Activated CD4-positive, alpha-beta memory T cell treated with anti-CD3 and anti-CD28 coated beads for 36 hours (primary cell): ENCODE measurements at regions of chr2 and their contacts with region 1.

Region 1: DNA sequence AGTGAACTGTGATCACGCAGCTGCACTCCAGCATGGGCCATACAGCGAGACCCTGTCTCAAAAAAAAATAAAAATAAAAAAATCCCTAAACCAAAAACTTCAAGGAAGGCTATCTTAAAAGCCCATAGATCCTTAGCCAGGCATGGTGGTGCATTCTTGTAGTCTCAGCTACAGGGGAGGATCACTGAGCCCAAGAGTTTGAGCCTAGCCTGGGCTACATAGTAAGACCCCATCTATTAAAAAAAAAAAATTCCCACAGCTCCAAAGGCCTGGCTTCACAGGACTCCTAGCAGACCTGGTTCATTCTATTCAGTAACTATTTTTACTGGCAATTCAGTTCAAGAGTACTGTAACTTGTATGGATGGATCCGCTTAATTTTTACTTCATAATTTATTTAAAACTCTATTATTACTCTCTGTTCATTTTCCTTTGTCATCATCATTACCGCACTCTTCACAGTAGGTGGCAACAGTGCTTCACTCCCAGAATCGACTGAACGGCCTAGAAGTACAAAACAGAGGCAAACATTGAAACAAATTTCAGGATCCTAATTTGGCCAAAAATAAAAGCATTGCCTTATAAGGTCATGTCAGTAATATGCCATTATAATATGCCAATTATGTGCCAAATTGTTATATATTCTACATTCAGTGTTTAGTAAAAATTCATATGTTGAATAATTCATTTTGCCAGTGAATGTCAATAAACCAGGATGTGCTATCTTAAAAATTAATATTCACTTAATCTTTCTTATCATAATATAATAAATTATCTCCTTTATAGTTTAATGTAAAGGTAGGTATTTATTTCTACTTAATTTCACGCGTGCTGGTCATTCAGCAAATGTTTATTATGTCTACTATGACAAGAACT is 14.3 kb upstream of the STAM2 start:
- DNase-seq: no peak
- H3K4me3 Mint-ChIP-seq: no peak overlapping the region
- H3K27ac Mint-ChIP-seq: no peak overlapping the region
- H3K4me1 Mint-ChIP-seq: no peaks in the 10 kb centered on the region
- H3K27me3 Mint-ChIP-seq: peaks cover 28% of the 10 kb centered on the region

Region 2: DNA sequence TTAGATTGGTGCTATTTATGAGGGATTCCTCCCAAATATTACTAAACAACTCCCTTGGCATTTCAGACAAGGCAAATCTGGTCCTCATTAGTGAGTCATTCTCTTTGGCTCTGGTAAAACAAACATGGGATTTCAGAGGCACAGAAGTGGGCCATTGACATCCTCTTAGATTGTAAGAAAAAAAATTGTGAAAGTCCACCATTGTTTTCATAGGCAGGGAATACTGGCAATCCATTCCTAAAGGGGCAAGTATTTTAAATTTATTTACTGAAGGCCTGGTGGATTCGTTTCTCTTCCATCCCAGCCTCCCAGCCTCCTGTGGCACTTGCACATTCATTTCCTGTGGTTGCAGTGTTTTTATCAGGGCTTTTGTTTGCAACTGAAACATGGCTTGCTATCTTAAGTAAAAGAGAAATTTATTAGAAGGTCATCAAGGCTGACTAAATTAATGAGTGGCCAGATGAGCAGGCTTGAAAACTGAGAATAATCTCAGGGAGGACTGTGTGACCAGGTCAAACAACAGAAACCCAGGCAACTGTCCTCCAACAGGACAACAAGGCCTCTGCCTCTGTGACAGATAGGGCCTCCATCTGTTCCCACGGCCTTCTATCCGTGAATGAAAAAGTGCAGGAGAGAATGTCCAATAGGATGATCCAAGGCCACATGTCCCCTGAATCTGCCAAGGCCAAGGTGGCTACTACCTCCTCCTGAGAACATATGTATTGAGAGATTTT is 855.6 kb before region 1 on chr2:
- CTCF ChIA-PET with region 1: no interaction called
- POLR2A ChIA-PET with region 1: no interaction called
- intact Hi-C with region 1: no loop called
- DNase-seq: no peak
- H3K4me3 Mint-ChIP-seq: no peak overlapping the region
- H3K27ac Mint-ChIP-seq: no peak overlapping the region
- H3K4me1 Mint-ChIP-seq: no peaks in the 10 kb centered on the region
- H3K27me3 Mint-ChIP-seq: peaks cover 10% of the 10 kb centered on the region

Region 3: DNA sequence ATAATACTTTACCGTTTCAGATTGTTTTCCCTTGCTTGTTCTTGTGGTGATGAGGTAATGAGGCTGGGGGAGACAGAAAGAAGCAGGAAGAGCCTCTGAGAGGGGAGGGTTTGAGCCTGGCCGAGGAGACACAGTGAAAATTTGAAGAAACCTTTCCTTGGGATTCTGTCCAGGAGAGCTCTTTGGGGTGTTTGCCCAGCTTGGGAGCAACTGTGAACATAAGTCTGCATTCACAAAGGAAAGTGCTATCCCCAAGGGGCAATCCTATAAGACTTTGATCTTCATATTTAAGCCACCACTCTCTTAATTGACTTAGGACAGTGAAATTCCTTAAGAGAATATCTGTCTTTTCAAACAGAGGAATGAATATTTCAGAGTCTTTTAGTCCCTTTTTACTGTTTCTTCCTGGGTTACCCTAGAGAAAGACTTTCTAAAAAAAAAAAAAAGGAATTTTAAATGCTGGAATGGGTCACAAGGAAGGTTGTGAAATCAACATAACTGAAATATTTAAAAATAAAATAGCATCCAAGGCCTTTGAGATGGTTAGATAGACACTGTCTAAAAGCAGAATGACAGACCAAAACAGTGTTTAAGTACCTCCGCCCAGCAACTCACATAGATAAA is 38.2 kb after region 1 on chr2:
- CTCF ChIA-PET with region 1: no interaction called
- POLR2A ChIA-PET with region 1: no interaction called
- intact Hi-C with region 1: no loop called
- DNase-seq: no peak
- H3K4me3 Mint-ChIP-seq: no peak overlapping the region
- H3K27ac Mint-ChIP-seq: no peak overlapping the region
- H3K4me1 Mint-ChIP-seq: no peaks in the 10 kb centered on the region
- H3K27me3 Mint-ChIP-seq: peaks cover 1% of the 10 kb centered on the region

Region 4: GRCh38 chr2:152376385-152376784 is 186.5 kb after region 1 on chr2:
- CTCF ChIA-PET with region 1: no interaction called
- POLR2A ChIA-PET with region 1: no interaction called
- intact Hi-C with region 1: no loop called
- DNase-seq: no peak
- H3K4me3 Mint-ChIP-seq: no peak overlapping the region
- H3K27ac Mint-ChIP-seq: no peak overlapping the region
- H3K4me1 Mint-ChIP-seq: no peaks in the 10 kb centered on the region
- H3K27me3 Mint-ChIP-seq: peaks cover 12% of the 10 kb centered on the region

Region 5: GRCh38 chr2:152627351-152627957 is 437.6 kb after region 1 on chr2:
- CTCF ChIA-PET with region 1: interaction called, 5 read pairs
- POLR2A ChIA-PET with region 1: no interaction called
- intact Hi-C with region 1: loop called (anchors 2 kb)
- DNase-seq: no peak
- H3K4me3 Mint-ChIP-seq: no peak overlapping the region
- H3K27ac Mint-ChIP-seq: no peak overlapping the region
- H3K4me1 Mint-ChIP-seq: peaks cover 9% of the 10 kb centered on the region
- H3K27me3 Mint-ChIP-seq: peaks cover 4% of the 10 kb centered on the region

Region 6: GRCh38 chr2:152635635-152636298 is 445.9 kb after region 1 on chr2:
- CTCF ChIA-PET with region 1: interaction called, 15 read pairs
- POLR2A ChIA-PET with region 1: no interaction called
- intact Hi-C with region 1: loop called (anchors 1 kb)
- DNase-seq: peak; percentile 69
- H3K4me3 Mint-ChIP-seq: no peak overlapping the region
- H3K27ac Mint-ChIP-seq: no peak overlapping the region
- H3K4me1 Mint-ChIP-seq: no peaks in the 10 kb centered on the region
- H3K27me3 Mint-ChIP-seq: peaks cover 7% of the 10 kb centered on the region